ENCODE measurements at regions of chr7 and their contacts with region 1.

Region 1: DNA sequence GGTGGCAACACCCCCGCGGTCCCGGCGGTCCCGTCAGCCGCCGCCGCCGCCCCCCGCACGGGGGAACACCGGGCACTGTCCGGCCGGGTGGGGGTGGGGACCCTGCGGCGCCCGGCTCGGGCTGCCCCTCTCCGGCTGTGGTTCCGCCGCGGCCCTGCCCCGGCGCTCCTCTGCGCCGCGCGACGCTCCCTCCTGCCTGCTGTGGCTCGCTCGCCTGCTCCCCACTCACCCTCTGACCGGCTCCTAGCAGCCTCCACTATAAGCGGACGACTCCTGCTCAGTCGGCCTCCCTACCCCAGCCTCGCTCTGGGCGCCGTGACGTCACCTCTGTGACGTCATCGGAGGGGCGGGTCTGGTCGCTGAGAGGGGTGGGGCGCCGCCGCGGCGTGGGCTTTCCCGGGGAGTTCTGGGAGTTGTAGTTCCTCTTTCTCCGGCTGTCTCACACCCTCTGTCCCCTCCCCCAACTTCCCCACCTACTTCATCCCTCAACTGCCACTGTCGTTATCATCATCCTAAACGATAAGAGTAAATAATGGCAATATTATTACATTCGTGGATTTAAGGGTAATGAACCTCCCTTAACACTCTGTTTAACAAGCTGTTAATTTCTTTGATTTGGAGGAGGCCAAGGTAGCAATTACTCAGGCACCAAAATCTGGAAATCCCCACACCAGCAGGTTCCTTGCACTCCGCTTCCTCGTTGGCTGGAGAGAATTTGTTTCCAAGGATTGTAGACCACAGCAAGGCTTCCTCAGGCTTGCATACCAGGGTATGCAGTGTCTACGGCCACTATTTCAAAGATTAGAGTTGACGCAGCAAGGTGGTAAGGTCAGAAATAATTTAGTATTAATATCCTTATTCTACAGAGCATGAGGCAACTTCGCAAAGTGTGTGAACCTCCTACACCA is at the start of gene UBE2H:
- DNase-seq: peak; percentile 96
- ATAC-seq: peak; percentile 73
- H3K4me3 ChIP-seq: peak within 1 kb of the TSS; percentile 72 to 95 (median 93)
- H3K4me3 Mint-ChIP-seq: peak within 1 kb of the TSS; percentile 95
- H3K27ac ChIP-seq: peak within 1 kb of the TSS; percentile 87 to 94
- H3K27ac Mint-ChIP-seq: peak within 1 kb of the TSS; percentile 99
- H3K4me1 ChIP-seq: peaks cover 32 to 40% of the 10 kb centered on the region in 2 donors
- H3K4me1 Mint-ChIP-seq: peaks cover 16% of the 10 kb centered on the region
- H3K27me3 ChIP-seq: no peaks in the 10 kb centered on the region
- H3K27me3 Mint-ChIP-seq: no peaks in the 10 kb centered on the region
- CTCF ChIP-seq: no peak
- total RNA-seq, gene UBE2H: 43.6 and 54.1 TPM in 2 replicates

Region 2: GRCh38 chr7:129225931-129226572 is 726.9 kb before region 1 on chr7:
- CTCF ChIA-PET with region 1: no interaction called
- POLR2A ChIA-PET with region 1: no interaction called
- intact Hi-C with region 1: no loop called
- DNase-seq: no peak
- ATAC-seq: no peak
- H3K4me3 ChIP-seq: peak overlapping the region; percentile 61 to 94 (median 75)
- H3K4me3 Mint-ChIP-seq: peak overlapping the region; percentile 93
- H3K27ac ChIP-seq: peak overlapping the region in 1 of 2 donors; percentile 94
- H3K27ac Mint-ChIP-seq: peak overlapping the region; percentile 88
- H3K4me1 ChIP-seq: peaks cover 27% of the 10 kb centered on the region in 2 donors
- H3K4me1 Mint-ChIP-seq: peaks cover 35% of the 10 kb centered on the region
- H3K27me3 ChIP-seq: no peaks in the 10 kb centered on the region
- H3K27me3 Mint-ChIP-seq: no peaks in the 10 kb centered on the region
- CTCF ChIP-seq: no peak

Region 3: DNA sequence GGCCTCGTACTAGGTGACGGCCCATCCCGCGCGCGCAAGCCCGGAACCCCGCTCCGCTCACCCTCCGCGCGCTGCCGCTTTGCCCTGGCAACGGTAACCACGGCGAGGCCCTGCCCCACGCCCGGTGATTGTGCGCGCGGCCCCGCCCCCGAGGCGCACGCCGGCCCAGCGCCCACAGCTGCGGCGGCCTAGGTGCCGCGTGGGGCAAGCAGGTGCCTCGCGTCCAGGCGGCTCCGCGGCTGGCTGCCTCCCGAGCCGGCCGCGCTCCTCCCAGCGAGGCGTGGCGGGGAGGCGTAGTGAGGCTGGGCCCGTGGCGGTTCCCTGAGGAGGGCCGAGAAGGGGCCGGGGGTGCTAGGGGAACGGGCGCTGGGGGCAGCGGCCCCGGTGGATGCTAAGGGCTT is 450.5 kb before region 1 on chr7 and contains the start of gene SMKR1:
- CTCF ChIA-PET with region 1: no interaction called
- POLR2A ChIA-PET with region 1: no interaction called
- intact Hi-C with region 1: loop called (anchors 2 kb)
- DNase-seq: peak; percentile 98
- ATAC-seq: peak; percentile 89
- H3K4me3 ChIP-seq: peak within 1 kb of the TSS; percentile 54 to 77 (median 66)
- H3K4me3 Mint-ChIP-seq: peak within 1 kb of the TSS; percentile 90
- H3K27ac ChIP-seq: peak within 1 kb of the TSS; percentile 72
- H3K27ac Mint-ChIP-seq: peak within 1 kb of the TSS; percentile 89
- H3K4me1 ChIP-seq: peaks cover 14 to 32% of the 10 kb centered on the region in 2 donors
- H3K4me1 Mint-ChIP-seq: peaks cover 22% of the 10 kb centered on the region
- H3K27me3 ChIP-seq: no peaks in the 10 kb centered on the region
- H3K27me3 Mint-ChIP-seq: no peaks in the 10 kb centered on the region
- CTCF ChIP-seq: no peak
- total RNA-seq, gene SMKR1: 2.9 and 3.8 TPM in 2 replicates

Region 4: DNA sequence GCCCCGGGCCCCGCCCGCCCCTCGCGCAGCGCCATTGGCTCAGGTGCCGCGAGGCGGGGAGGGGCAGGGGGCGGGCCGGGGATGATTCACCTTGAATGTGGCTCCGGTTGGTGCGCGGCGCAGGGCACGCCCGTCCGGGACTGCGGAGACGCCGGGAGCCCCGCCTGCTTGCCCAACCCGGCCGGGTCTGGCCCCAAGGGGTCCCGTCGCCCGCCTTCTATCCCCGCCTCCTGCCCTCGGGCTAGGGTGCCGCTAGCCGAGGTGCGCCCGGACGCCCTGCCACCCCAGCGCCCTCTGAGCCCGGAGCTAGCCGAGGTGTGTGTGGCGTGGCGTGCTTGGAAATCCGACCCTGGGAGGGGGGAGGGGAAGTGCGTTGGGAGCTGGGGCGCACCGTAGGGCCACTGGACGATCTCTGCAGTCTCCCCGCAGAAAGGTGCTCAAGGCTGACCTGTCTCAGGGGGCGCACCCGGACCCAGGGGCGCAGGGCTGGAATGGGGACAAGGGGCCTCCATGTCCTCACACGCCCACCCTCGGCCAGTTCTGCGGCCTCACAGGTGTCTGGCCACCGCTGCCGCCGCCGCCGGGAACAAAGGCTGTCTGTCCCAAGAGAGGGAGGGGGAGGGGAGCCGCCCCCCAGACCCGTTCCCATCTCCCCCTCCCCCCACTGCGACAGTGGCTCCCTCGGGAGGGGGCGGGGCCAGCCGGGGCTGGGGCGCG is 172.5 kb before region 1 on chr7:
- CTCF ChIA-PET with region 1: no interaction called
- POLR2A ChIA-PET with region 1: no interaction called
- intact Hi-C with region 1: loop called (anchors 5 kb)
- DNase-seq: no peak
- ATAC-seq: peak; percentile 74
- H3K4me3 ChIP-seq: peak overlapping the region in 4 of 5 experiments; percentile 40 to 65 (median 57)
- H3K4me3 Mint-ChIP-seq: peak overlapping the region; percentile 81
- H3K27ac ChIP-seq: no peak overlapping the region
- H3K27ac Mint-ChIP-seq: no peak overlapping the region
- H3K4me1 ChIP-seq: peaks cover 66 to 71% of the 10 kb centered on the region in 2 donors
- H3K4me1 Mint-ChIP-seq: peaks cover 44% of the 10 kb centered on the region
- H3K27me3 ChIP-seq: peaks cover 0 to 91% (median 59%) of the 10 kb centered on the region in 4 experiments
- H3K27me3 Mint-ChIP-seq: peaks cover 43% of the 10 kb centered on the region
- CTCF ChIP-seq: no peak

Region 5: GRCh38 chr7:129903935-129904334 is 49.0 kb before region 1 on chr7:
- CTCF ChIA-PET with region 1: interaction called, 4 read pairs
- POLR2A ChIA-PET with region 1: interaction called, 16 read pairs
- intact Hi-C with region 1: loop called (anchors 10 kb)
- DNase-seq: peak; percentile 69
- ATAC-seq: peak; percentile 89
- H3K4me3 ChIP-seq: peak overlapping the region in 1 of 5 experiments; percentile 41
- H3K4me3 Mint-ChIP-seq: peak overlapping the region; percentile 41
- H3K27ac ChIP-seq: peak overlapping the region; percentile 53 to 77
- H3K27ac Mint-ChIP-seq: peak overlapping the region; percentile 84
- H3K4me1 ChIP-seq: peaks cover 65 to 68% of the 10 kb centered on the region in 2 donors
- H3K4me1 Mint-ChIP-seq: peaks cover 83% of the 10 kb centered on the region
- H3K27me3 ChIP-seq: no peaks in the 10 kb centered on the region
- H3K27me3 Mint-ChIP-seq: no peaks in the 10 kb centered on the region
- CTCF ChIP-seq: no peak

Region 6: DNA sequence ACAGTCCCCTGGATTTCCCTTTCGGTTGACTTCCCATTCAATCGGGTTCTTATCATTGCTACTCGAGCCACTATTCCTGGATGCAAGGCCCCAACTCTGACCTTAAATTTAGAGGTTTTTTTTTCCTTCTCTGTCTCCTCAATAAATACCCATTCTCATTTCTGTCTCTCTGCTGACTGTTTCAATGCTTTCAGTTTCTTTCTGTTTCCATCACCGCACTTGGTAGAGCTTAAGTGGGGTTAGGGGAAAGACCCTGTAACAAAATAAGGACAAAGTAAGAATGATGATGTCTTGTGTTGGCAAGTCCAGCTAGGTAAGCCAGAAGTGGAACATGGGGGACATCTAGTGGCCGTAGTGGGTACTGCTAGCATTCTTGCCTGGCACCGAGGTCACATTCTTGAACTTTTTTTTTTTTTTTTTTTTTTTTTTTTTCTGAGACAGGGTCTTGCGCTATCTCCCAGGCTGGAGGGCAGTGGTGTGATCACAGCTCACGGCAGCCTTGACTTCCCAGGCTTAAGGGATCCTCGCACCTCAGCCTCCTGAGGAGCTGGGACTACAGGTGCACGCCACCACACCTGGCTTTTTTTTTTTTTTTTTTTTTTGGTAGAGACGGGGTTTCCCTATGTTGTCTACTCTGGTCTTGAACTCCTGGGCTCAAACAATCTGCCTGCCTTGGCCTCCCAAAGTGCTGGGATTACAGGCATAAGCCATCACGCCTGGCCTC is 57.9 kb after region 1 on chr7:
- CTCF ChIA-PET with region 1: interaction called, 11 read pairs
- POLR2A ChIA-PET with region 1: no interaction called
- intact Hi-C with region 1: no loop called
- DNase-seq: peak; percentile 91
- ATAC-seq: peak; percentile 97
- H3K4me3 ChIP-seq: no peak overlapping the region
- H3K4me3 Mint-ChIP-seq: no peak overlapping the region
- H3K27ac ChIP-seq: no peak overlapping the region
- H3K27ac Mint-ChIP-seq: peak overlapping the region; percentile 34
- H3K4me1 ChIP-seq: peaks cover 0 to 6% of the 10 kb centered on the region in 2 donors
- H3K4me1 Mint-ChIP-seq: peaks cover 6% of the 10 kb centered on the region
- H3K27me3 ChIP-seq: no peaks in the 10 kb centered on the region
- H3K27me3 Mint-ChIP-seq: no peaks in the 10 kb centered on the region
- CTCF ChIP-seq: peak; percentile 86

Region 7: GRCh38 chr7:130205084-130205947 is 252.4 kb after region 1 on chr7 and contains the start of gene TMEM209:
- CTCF ChIA-PET with region 1: interaction called, 3 read pairs
- POLR2A ChIA-PET with region 1: no interaction called
- intact Hi-C with region 1: loop called (anchors 5 kb)
- DNase-seq: peak; percentile 96
- ATAC-seq: peak; percentile 97
- H3K4me3 ChIP-seq: peak within 1 kb of the TSS; percentile 83 to 100 (median 89)
- H3K4me3 Mint-ChIP-seq: peak within 1 kb of the TSS; percentile 97
- H3K27ac ChIP-seq: peak within 1 kb of the TSS; percentile 86 to 87
- H3K27ac Mint-ChIP-seq: peak within 1 kb of the TSS; percentile 96
- H3K4me1 ChIP-seq: peaks cover 4 to 14% of the 10 kb centered on the region in 2 donors
- H3K4me1 Mint-ChIP-seq: peaks cover 15% of the 10 kb centered on the region
- H3K27me3 ChIP-seq: no peaks in the 10 kb centered on the region
- H3K27me3 Mint-ChIP-seq: peaks cover 6% of the 10 kb centered on the region
- CTCF ChIP-seq: no peak
- total RNA-seq, gene TMEM209: 33.2 and 35.8 TPM in 2 replicates

Measured in B cell (primary cell).